ENCODE measurements at regions of chr1 and their contacts with region 1.

Region 1: GRCh38 chr1:226186124-226187018 is at the start of gene ACBD3:
- DNase-seq: peak; percentile 92
- ATAC-seq: peak; percentile 89
- H3K4me3 ChIP-seq: peak within 1 kb of the TSS; percentile 58 to 94 (median 70)
- H3K4me3 Mint-ChIP-seq: peak within 1 kb of the TSS; percentile 96
- H3K27ac ChIP-seq: peak within 1 kb of the TSS; percentile 86 to 96
- H3K27ac Mint-ChIP-seq: peak within 1 kb of the TSS; percentile 95
- H3K4me1 ChIP-seq: peaks cover 42 to 52% of the 10 kb centered on the region in 2 donors
- H3K4me1 Mint-ChIP-seq: peaks cover 41% of the 10 kb centered on the region
- H3K27me3 ChIP-seq: no peaks in the 10 kb centered on the region
- H3K27me3 Mint-ChIP-seq: no peaks in the 10 kb centered on the region
- CTCF ChIP-seq: no peak
- total RNA-seq, gene ACBD3: 60.6 and 73.9 TPM in 2 replicates

Region 2: DNA sequence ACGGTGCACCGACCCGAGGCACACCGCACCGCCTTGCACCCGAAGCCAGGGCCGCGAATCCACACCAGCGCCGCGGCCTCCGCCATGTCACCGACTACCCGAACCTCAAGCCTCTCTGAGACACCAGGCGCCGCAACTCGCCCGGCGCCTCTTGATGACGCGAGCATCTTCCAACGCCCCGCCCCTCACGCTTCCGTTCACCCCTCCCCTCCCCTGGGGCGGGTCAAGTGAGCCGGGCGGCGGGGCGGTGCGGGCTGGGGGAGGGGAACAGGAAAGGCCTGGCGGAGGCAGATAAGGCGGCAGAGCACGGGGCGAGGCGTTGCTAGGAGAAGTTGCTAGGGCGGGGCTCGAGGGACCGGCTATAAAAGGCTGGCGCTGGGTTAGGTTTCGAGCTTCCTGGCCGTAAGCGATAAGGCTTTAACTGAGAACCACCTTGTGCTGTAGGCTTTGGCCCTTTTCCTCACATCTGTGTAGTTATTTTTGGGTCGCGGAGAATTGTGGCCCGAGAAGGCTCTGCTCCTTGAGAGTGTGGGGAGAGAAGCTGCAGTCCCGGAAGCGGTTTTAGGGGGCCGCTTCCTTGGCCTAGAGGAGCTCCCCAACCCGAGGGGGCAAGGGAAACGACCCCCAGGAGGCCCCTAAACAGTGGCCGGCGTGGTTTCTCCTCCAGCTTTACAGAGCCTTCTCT is 187.0 kb before region 1 on chr1 and contains the start of gene SDE2:
- CTCF ChIA-PET with region 1: no interaction called
- POLR2A ChIA-PET with region 1: no interaction called
- intact Hi-C with region 1: loop called (anchors 5 kb)
- DNase-seq: peak; percentile 100
- ATAC-seq: peak; percentile 81
- H3K4me3 ChIP-seq: peak within 1 kb of the TSS; percentile 75 to 93 (median 88)
- H3K4me3 Mint-ChIP-seq: peak within 1 kb of the TSS; percentile 100
- H3K27ac ChIP-seq: peak within 1 kb of the TSS; percentile 100
- H3K27ac Mint-ChIP-seq: peak within 1 kb of the TSS; percentile 97
- H3K4me1 ChIP-seq: peaks cover 65 to 72% of the 10 kb centered on the region in 2 donors
- H3K4me1 Mint-ChIP-seq: peaks cover 74% of the 10 kb centered on the region
- H3K27me3 ChIP-seq: no peaks in the 10 kb centered on the region
- H3K27me3 Mint-ChIP-seq: no peaks in the 10 kb centered on the region
- CTCF ChIP-seq: no peak
- total RNA-seq, gene SDE2: 26.0 and 26.3 TPM in 2 replicates

Region 3: GRCh38 chr1:226149806-226150205 is 36.6 kb before region 1 on chr1:
- CTCF ChIA-PET with region 1: interaction called, 11 read pairs
- POLR2A ChIA-PET with region 1: interaction called, 3 read pairs
- intact Hi-C with region 1: loop called (anchors 5 kb)
- DNase-seq: peak; percentile 30
- ATAC-seq: peak; percentile 56
- H3K4me3 ChIP-seq: no peak overlapping the region
- H3K4me3 Mint-ChIP-seq: no peak overlapping the region
- H3K27ac ChIP-seq: no peak overlapping the region
- H3K27ac Mint-ChIP-seq: peak overlapping the region; percentile 85
- H3K4me1 ChIP-seq: peaks cover 18 to 26% of the 10 kb centered on the region in 2 donors
- H3K4me1 Mint-ChIP-seq: peaks cover 44% of the 10 kb centered on the region
- H3K27me3 ChIP-seq: no peaks in the 10 kb centered on the region
- H3K27me3 Mint-ChIP-seq: no peaks in the 10 kb centered on the region
- CTCF ChIP-seq: no peak

Region 4: DNA sequence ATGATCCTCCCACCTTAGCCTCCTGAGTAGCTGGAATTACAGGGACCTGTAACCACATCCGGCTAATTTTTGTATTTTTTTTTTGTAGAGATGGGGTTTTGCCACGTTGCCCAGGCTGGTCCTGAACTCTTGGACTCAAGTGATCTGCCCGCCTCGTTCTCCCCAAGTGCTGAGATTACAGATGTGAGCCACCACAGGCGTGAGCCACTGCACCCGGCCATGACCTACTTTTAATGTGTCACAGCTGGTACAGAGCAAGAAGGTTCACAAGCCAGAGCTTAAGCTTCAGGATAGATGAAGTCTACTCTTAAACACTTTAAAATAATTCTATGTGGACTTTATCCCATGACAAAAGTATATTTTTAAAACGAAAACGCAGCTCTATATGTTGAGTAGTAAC is 23.5 kb before region 1 on chr1:
- CTCF ChIA-PET with region 1: interaction called, 4 read pairs
- POLR2A ChIA-PET with region 1: interaction called, 6 read pairs
- intact Hi-C with region 1: loop called (anchors 2 kb)
- DNase-seq: no peak
- ATAC-seq: no peak
- H3K4me3 ChIP-seq: no peak overlapping the region
- H3K4me3 Mint-ChIP-seq: no peak overlapping the region
- H3K27ac ChIP-seq: peak overlapping the region in 1 of 2 donors; percentile 42
- H3K27ac Mint-ChIP-seq: peak overlapping the region; percentile 46
- H3K4me1 ChIP-seq: peaks cover 30% of the 10 kb centered on the region in 2 donors
- H3K4me1 Mint-ChIP-seq: peaks cover 51% of the 10 kb centered on the region
- H3K27me3 ChIP-seq: no peaks in the 10 kb centered on the region
- H3K27me3 Mint-ChIP-seq: no peaks in the 10 kb centered on the region
- CTCF ChIP-seq: no peak

Region 5: GRCh38 chr1:226233293-226233692 is 46.9 kb after region 1 on chr1:
- CTCF ChIA-PET with region 1: no interaction called
- POLR2A ChIA-PET with region 1: no interaction called
- intact Hi-C with region 1: no loop called
- DNase-seq: peak; percentile 50
- ATAC-seq: peak; percentile 61
- H3K4me3 ChIP-seq: no peak overlapping the region
- H3K4me3 Mint-ChIP-seq: no peak overlapping the region
- H3K27ac ChIP-seq: no peak overlapping the region
- H3K27ac Mint-ChIP-seq: no peak overlapping the region
- H3K4me1 ChIP-seq: peaks cover 0 to 8% of the 10 kb centered on the region in 2 donors
- H3K4me1 Mint-ChIP-seq: peaks cover 7% of the 10 kb centered on the region
- H3K27me3 ChIP-seq: no peaks in the 10 kb centered on the region
- H3K27me3 Mint-ChIP-seq: no peaks in the 10 kb centered on the region
- CTCF ChIP-seq: no peak

Region 6: GRCh38 chr1:226308723-226309315 is 122.4 kb after region 1 on chr1 and contains the start of gene LIN9:
- CTCF ChIA-PET with region 1: no interaction called
- POLR2A ChIA-PET with region 1: no interaction called
- intact Hi-C with region 1: loop called (anchors 1 kb)
- DNase-seq: peak; percentile 93
- ATAC-seq: peak; percentile 91
- H3K4me3 ChIP-seq: peak within 1 kb of the TSS; percentile 40 to 99 (median 96)
- H3K4me3 Mint-ChIP-seq: peak within 1 kb of the TSS; percentile 95
- H3K27ac ChIP-seq: peak within 1 kb of the TSS; percentile 25 to 81
- H3K27ac Mint-ChIP-seq: peak within 1 kb of the TSS; percentile 90
- H3K4me1 ChIP-seq: peaks cover 12 to 14% of the 10 kb centered on the region in 2 donors
- H3K4me1 Mint-ChIP-seq: peaks cover 21% of the 10 kb centered on the region
- H3K27me3 ChIP-seq: peaks cover 0 to 14% (median 2%) of the 10 kb centered on the region in 4 experiments
- H3K27me3 Mint-ChIP-seq: peaks cover 5% of the 10 kb centered on the region
- CTCF ChIP-seq: no peak
- total RNA-seq, gene LIN9: 6.4 and 6.7 TPM in 2 replicates

Region 7: GRCh38 chr1:226390326-226391080 is 204.1 kb after region 1 on chr1:
- CTCF ChIA-PET with region 1: no interaction called
- POLR2A ChIA-PET with region 1: no interaction called
- intact Hi-C with region 1: no loop called
- DNase-seq: no peak
- ATAC-seq: no peak
- H3K4me3 ChIP-seq: no peak overlapping the region
- H3K4me3 Mint-ChIP-seq: no peak overlapping the region
- H3K27ac ChIP-seq: no peak overlapping the region
- H3K27ac Mint-ChIP-seq: no peak overlapping the region
- H3K4me1 ChIP-seq: no peaks in the 10 kb centered on the region
- H3K4me1 Mint-ChIP-seq: peaks cover 11% of the 10 kb centered on the region
- H3K27me3 ChIP-seq: no peaks in the 10 kb centered on the region
- H3K27me3 Mint-ChIP-seq: no peaks in the 10 kb centered on the region
- CTCF ChIP-seq: no peak